Activated CD4-positive, alpha-beta memory T cell treated with anti-CD3 and anti-CD28 coated beads for 36 hours (primary cell): ENCODE measurements at regions of chr3 and their contacts with region 1.

Region 1: GRCh38 chr3:134803051-134803505 is 8.0 kb downstream of the EPHB1 start:
- DNase-seq: peak; percentile 71
- H3K4me3 Mint-ChIP-seq: no peak overlapping the region
- H3K27ac Mint-ChIP-seq: peak overlapping the region; percentile 79
- H3K4me1 Mint-ChIP-seq: peaks cover 35% of the 10 kb centered on the region
- H3K27me3 Mint-ChIP-seq: peaks cover 11% of the 10 kb centered on the region

Region 2: GRCh38 chr3:134904241-134904771 is 101.2 kb after region 1 on chr3:
- CTCF ChIA-PET with region 1: no interaction called
- POLR2A ChIA-PET with region 1: no interaction called
- intact Hi-C with region 1: loop called (anchors 5 kb)
- DNase-seq: peak; percentile 49
- H3K4me3 Mint-ChIP-seq: no peak overlapping the region
- H3K27ac Mint-ChIP-seq: no peak overlapping the region
- H3K4me1 Mint-ChIP-seq: peaks cover 10% of the 10 kb centered on the region
- H3K27me3 Mint-ChIP-seq: peaks cover 7% of the 10 kb centered on the region

Region 3: DNA sequence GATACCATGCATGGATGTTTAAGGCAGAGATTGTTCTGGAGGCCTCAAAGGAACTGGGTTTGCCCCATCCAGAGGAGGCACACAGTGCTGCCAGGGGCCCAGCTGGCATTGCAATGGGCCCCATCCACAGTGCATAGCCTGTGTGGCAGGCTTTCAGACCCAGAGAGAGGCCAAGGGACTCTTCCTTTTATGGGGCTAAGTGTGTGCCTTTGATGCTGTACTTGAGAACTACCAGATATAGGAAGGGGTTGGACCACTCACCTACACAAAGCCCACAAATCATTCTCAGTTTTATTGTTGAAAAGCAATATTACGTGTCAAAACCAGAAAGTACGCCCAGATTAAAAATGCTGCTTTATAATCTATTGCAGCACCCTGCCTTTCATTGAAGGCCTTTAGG is 126.9 kb after region 1 on chr3:
- CTCF ChIA-PET with region 1: no interaction called
- POLR2A ChIA-PET with region 1: no interaction called
- intact Hi-C with region 1: loop called (anchors 1 kb)
- DNase-seq: peak; percentile 19
- H3K4me3 Mint-ChIP-seq: no peak overlapping the region
- H3K27ac Mint-ChIP-seq: no peak overlapping the region
- H3K4me1 Mint-ChIP-seq: peaks cover 17% of the 10 kb centered on the region
- H3K27me3 Mint-ChIP-seq: peaks cover 9% of the 10 kb centered on the region